ENCODE measurements at regions of chr12 and their contacts with region 1.

Region 1: GRCh38 chr12:128783129-128783574 is 40.6 kb downstream of the SLC15A4 start:
- DNase-seq: no peak
- H3K4me3 Mint-ChIP-seq: no peak overlapping the region
- H3K27ac Mint-ChIP-seq: no peak overlapping the region
- H3K4me1 Mint-ChIP-seq: no peaks in the 10 kb centered on the region
- H3K27me3 Mint-ChIP-seq: no peaks in the 10 kb centered on the region
- CTCF ChIP-seq: no peak

Region 2: GRCh38 chr12:128510511-128510910 is 272.6 kb before region 1 on chr12:
- CTCF ChIA-PET with region 1: no interaction called
- intact Hi-C with region 1: no loop called
- DNase-seq: no peak
- H3K4me3 Mint-ChIP-seq: no peak overlapping the region
- H3K27ac Mint-ChIP-seq: no peak overlapping the region
- H3K4me1 Mint-ChIP-seq: no peaks in the 10 kb centered on the region
- H3K27me3 Mint-ChIP-seq: no peaks in the 10 kb centered on the region
- CTCF ChIP-seq: no peak

Region 3: GRCh38 chr12:130013771-130014484 is 1230.8 kb after region 1 on chr12:
- CTCF ChIA-PET with region 1: no interaction called
- intact Hi-C with region 1: loop called (anchors 5 kb)
- DNase-seq: peak; percentile 57
- H3K4me3 Mint-ChIP-seq: no peak overlapping the region
- H3K27ac Mint-ChIP-seq: no peak overlapping the region
- H3K4me1 Mint-ChIP-seq: no peaks in the 10 kb centered on the region
- H3K27me3 Mint-ChIP-seq: no peaks in the 10 kb centered on the region
- CTCF ChIP-seq: peak; percentile 57

Measured in Calu3 (cell line).